ENCODE measurements at regions of chr1 and their contacts with region 1.

Region 1: DNA sequence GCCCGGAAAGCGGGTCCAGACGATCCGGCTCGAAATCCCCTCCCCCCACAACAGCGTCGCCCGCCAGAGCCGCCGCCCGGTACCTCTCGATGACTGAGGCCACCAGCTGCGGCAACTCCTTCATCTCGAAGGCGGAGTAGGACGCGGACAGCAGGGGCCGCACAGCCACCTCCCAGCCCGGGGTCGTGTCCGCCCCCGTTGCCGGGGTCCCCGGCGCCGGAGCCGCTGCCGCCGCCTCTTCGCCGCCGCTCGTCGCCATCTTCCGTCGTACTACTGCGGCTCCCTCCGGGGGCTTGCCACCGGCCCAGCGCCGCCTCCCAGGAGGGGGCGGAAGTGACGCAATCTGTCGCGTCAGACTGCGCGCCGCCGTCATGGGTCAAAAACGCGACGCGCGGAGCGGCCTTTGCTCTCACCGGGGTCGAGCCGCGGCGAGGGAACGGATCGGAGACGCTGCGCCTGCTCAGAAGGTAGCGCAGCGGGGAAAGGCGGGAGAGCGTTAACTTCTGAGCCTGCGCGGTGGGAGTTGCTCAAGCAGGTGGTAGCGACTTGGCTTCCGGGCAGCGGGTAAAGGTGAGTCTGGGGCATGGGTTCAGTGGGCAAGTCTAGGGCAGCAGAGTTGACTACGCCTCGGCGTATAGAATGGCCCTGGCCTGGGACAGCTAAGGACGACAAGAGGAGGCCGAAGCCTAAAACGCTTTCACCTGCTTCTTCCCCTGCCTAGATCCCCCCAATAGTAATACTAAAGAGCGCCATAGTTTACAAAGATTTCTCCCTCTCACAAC is at the start of gene UBR4:
- DNase-seq: peak; percentile 97
- H3K4me3 Mint-ChIP-seq: peak within 1 kb of the TSS; percentile 90
- H3K27ac Mint-ChIP-seq: peak within 1 kb of the TSS; percentile 94
- H3K4me1 Mint-ChIP-seq: peaks cover 78% of the 10 kb centered on the region
- H3K27me3 Mint-ChIP-seq: no peaks in the 10 kb centered on the region
- total RNA-seq, gene UBR4: 98.6 to 101 TPM

Region 2: DNA sequence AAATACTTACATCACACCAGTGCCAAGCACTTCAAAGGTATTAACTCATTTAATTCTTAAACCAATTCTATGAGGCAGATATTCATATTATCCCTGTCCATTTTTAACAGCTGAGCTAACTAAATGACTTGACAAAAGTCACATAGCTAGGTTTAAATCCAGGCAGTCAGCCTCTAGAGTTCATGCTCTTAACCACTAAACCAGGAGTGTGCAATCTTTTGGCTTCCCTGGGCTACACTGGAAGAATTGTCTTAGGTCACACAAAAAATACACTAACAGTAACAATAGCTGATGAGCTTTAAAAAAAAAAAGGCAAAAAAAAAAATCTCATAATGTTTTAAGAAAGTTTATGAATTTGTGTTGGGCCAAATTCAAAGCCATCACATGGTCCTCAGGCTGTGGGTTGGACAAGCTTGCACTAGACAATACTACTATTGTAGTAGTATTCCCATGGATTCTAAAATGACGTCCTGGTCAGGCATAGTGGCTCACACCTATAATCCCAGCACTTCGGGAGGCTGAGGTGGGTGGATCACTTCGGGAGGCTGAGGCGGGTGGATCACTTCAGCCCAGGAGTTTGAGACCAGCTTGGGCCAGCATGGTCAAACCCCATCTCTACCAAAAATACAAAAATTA is 10.1 kb before region 1 on chr1:
- CTCF ChIA-PET with region 1: interaction called, 3 read pairs
- POLR2A ChIA-PET with region 1: interaction called, 15 read pairs
- DNase-seq: no peak
- H3K4me3 Mint-ChIP-seq: no peak overlapping the region
- H3K27ac Mint-ChIP-seq: no peak overlapping the region
- H3K4me1 Mint-ChIP-seq: peaks cover 25% of the 10 kb centered on the region
- H3K27me3 Mint-ChIP-seq: no peaks in the 10 kb centered on the region

Region 3: GRCh38 chr1:19232526-19232851 is 22.3 kb after region 1 on chr1:
- CTCF ChIA-PET with region 1: no interaction called
- POLR2A ChIA-PET with region 1: interaction called, 10 read pairs
- DNase-seq: no peak
- H3K4me3 Mint-ChIP-seq: no peak overlapping the region
- H3K27ac Mint-ChIP-seq: no peak overlapping the region
- H3K4me1 Mint-ChIP-seq: no peaks in the 10 kb centered on the region
- H3K27me3 Mint-ChIP-seq: no peaks in the 10 kb centered on the region

Region 4: GRCh38 chr1:19251305-19252196 is 41.4 kb after region 1 on chr1 and contains the starts of genes EMC1 and MRTO4:
- CTCF ChIA-PET with region 1: interaction called, 4 read pairs
- POLR2A ChIA-PET with region 1: interaction called, 20 read pairs
- DNase-seq: peak; percentile 91
- H3K4me3 Mint-ChIP-seq: peak within 1 kb of the TSS; percentile 94
- H3K27ac Mint-ChIP-seq: peak within 1 kb of the TSS; percentile 86
- H3K4me1 Mint-ChIP-seq: peaks cover 34% of the 10 kb centered on the region
- H3K27me3 Mint-ChIP-seq: no peaks in the 10 kb centered on the region
- total RNA-seq, gene EMC1: 25.3 to 29.1 TPM
- total RNA-seq, gene MRTO4: 21.1 to 23.0 TPM

Region 5: GRCh38 chr1:19273106-19273843 is 63.1 kb after region 1 on chr1:
- CTCF ChIA-PET with region 1: no interaction called
- POLR2A ChIA-PET with region 1: no interaction called
- DNase-seq: no peak
- H3K4me3 Mint-ChIP-seq: no peak overlapping the region
- H3K27ac Mint-ChIP-seq: no peak overlapping the region
- H3K4me1 Mint-ChIP-seq: peaks cover 1% of the 10 kb centered on the region
- H3K27me3 Mint-ChIP-seq: peaks cover 17% of the 10 kb centered on the region

Measured in activated CD4-positive, alpha-beta memory T cell treated with anti-CD3 and anti-CD28 coated beads, Interleukin-2, amount 10 ng/mL, durations not matched to agents 7 days and 5 days (primary cell).